MCF 10A (cell line): ENCODE measurements at regions of chr20 and their contacts with region 1.

Region 1: GRCh38 chr20:34815636-34816035 is 9.8 kb downstream of the NCOA6 start:
- DNase-seq: no peak
- H3K4me3 Mint-ChIP-seq: no peak overlapping the region
- H3K27ac Mint-ChIP-seq: no peak overlapping the region
- H3K4me1 Mint-ChIP-seq: peaks cover 22% of the 10 kb centered on the region
- H3K27me3 Mint-ChIP-seq: no peaks in the 10 kb centered on the region
- CTCF ChIP-seq: no peak

Region 2: DNA sequence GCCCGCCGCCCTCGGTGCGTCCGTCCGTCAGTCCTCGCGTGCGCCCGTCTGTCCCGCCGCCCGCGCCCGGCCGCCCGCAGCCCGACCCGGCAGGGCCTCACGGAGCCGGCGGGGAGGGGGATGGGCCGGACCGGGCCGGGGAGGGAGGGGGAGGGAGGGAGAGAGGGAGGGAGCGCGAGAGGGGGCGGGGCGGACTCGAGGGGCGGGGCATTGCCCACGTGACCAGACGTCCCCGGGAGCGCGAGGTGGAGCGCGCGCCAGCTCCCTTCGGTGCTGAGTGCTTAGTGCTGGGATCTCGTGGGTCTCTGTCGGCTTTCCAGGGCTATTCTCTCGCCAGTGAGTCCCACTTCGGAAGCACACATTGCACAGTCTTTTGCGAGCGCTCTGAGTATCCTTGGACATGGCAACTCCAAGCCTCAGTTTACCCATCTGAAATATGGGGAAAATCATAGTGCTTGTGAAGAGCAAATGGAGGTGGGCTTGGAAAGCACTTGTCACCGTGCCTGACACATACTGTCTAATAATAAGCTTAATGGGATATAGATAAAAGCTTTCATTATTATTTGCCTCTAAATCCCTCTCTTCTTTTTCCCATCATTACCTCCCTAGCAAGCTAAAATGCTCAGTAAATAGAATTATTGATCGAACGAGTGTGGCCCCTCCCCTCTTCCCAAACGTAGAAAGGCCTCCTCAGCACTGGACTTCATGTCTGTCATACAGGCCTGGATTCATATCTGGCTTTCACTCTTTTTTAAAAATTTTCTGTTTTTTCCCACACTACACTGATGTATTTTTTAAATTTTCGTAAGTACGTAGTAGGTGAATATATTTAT is 10.1 kb after region 1 on chr20 and contains the start of gene NCOA6:
- CTCF ChIA-PET with region 1: no interaction called
- POLR2A ChIA-PET with region 1: interaction called, 12 read pairs
- intact Hi-C with region 1: no loop called
- DNase-seq: peak; percentile 78
- H3K4me3 Mint-ChIP-seq: peak within 1 kb of the TSS; percentile 97
- H3K27ac Mint-ChIP-seq: peak within 1 kb of the TSS; percentile 88
- H3K4me1 Mint-ChIP-seq: peaks cover 24% of the 10 kb centered on the region
- H3K27me3 Mint-ChIP-seq: peaks cover 22% of the 10 kb centered on the region
- CTCF ChIP-seq: no peak
- total RNA-seq, gene NCOA6: 25.7 and 27.9 TPM in 2 replicates

Region 3: GRCh38 chr20:36035745-36036144 is 1220.1 kb after region 1 on chr20:
- CTCF ChIA-PET with region 1: no interaction called
- POLR2A ChIA-PET with region 1: no interaction called
- intact Hi-C with region 1: no loop called
- DNase-seq: peak; percentile 67
- H3K4me3 Mint-ChIP-seq: no peak overlapping the region
- H3K27ac Mint-ChIP-seq: no peak overlapping the region
- H3K4me1 Mint-ChIP-seq: no peaks in the 10 kb centered on the region
- H3K27me3 Mint-ChIP-seq: no peaks in the 10 kb centered on the region
- CTCF ChIP-seq: no peak